Activated CD4-positive, alpha-beta T cell treated with anti-CD3 and anti-CD28 coated beads, Interleukin-2, amount 10 ng/mL, durations not matched to agents 24 days and 14 days (primary cell): ENCODE measurements at regions of chr19 and their contacts with region 1.

Region 1: GRCh38 chr19:19643158-19644053 is at the start of gene GMIP:
- DNase-seq: peak; percentile 96
- H3K4me3 Mint-ChIP-seq: peak within 1 kb of the TSS; percentile 98
- H3K27ac Mint-ChIP-seq: peak within 1 kb of the TSS; percentile 94
- H3K4me1 Mint-ChIP-seq: peaks cover 14% of the 10 kb centered on the region
- H3K27me3 Mint-ChIP-seq: no peaks in the 10 kb centered on the region
- total RNA-seq, gene GMIP: 56.1 and 61.2 TPM in 2 replicates

Region 2: DNA sequence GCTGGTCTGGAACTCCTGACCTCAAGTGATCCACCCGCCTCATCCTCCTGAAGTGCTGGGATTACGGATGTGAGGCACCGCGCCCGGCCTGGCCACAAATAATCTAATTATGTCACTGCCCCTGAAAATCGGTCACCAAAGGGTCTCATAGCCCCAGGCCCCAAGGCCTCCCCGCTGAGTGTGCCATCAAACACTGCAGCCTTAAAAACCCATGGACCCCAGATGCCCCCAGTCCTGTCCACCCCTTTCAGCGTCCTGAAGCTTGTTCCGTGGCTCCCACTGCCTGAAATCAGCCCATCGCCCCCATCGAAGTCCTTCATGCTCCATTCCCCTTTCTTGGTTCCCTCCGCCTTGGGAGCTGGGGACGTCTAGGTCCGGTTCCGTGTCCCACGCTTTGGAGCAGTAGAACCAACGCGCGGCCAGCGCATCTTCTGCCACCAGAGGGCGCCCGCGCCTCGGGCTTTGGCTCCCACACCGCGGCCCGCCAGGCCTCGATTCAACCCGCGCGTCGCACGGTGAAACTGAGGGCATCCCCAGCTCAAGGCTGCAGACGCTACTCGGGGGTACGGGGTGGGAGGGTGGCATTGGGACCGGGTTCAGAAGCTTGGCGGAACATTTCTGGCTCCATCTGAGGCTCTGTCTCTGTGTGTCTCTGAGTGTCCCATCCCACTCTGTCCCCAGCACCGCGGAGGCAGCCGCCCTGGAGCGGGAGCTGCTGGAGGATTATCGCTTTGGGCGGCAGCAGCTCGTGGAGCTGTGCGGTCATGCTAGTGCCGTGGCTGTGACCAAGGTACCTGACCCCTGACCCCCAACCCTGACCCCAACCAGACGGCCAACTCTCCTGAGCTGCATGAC is 111.2 kb before region 1 on chr19:
- intact Hi-C with region 1: loop called (anchors 1 kb)
- DNase-seq: peak; percentile 96
- H3K4me3 Mint-ChIP-seq: peak overlapping the region; percentile 14
- H3K27ac Mint-ChIP-seq: peak overlapping the region; percentile 47
- H3K4me1 Mint-ChIP-seq: peaks cover 16% of the 10 kb centered on the region
- H3K27me3 Mint-ChIP-seq: peaks cover 3% of the 10 kb centered on the region

Region 3: DNA sequence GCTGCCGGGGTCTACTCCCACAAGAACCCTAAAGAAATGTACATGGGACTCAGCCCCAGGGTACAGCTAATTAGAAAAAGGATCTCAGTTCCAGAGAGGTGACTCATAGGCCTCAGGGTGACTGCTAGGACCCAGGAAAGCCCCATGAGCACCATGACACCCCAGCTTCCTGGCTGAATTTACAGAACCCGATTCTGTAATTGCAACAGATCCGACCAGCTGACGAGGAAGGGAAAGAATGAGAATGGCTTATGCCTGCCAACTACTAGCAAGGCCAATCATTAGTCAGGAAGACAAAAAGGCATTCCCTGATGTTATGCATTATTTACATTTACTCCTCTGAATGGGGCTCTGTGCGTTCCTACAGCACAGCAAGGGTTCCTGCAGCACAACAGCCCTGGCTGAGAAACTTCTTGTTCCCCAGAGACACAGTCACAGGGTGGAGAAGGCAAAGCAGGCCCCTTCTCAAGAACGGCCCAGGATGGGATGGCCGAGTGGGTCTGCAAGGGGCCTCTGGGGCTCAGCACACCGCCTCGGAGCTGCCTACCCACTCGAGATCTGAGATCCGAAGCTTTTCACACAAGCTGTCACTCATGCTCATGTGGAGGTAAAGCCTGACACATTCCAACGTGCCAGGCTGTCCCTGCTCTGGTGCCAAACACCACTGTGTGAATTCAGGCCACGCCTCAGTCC is 52.1 kb before region 1 on chr19:
- intact Hi-C with region 1: loop called (anchors 1 kb)
- DNase-seq: peak; percentile 92
- H3K4me3 Mint-ChIP-seq: peak overlapping the region; percentile 75
- H3K27ac Mint-ChIP-seq: peak overlapping the region; percentile 94
- H3K4me1 Mint-ChIP-seq: peaks cover 60% of the 10 kb centered on the region
- H3K27me3 Mint-ChIP-seq: no peaks in the 10 kb centered on the region

Region 4: GRCh38 chr19:19597809-19598306 is 45.5 kb before region 1 on chr19:
- intact Hi-C with region 1: loop called (anchors 2 kb)
- DNase-seq: peak; percentile 91
- H3K4me3 Mint-ChIP-seq: peak overlapping the region; percentile 82
- H3K27ac Mint-ChIP-seq: peak overlapping the region; percentile 96
- H3K4me1 Mint-ChIP-seq: peaks cover 61% of the 10 kb centered on the region
- H3K27me3 Mint-ChIP-seq: no peaks in the 10 kb centered on the region

Region 5: GRCh38 chr19:19627621-19628500 is 15.5 kb before region 1 on chr19 and contains the start of gene LPAR2:
- intact Hi-C with region 1: loop called (anchors 1 kb)
- DNase-seq: peak; percentile 91
- H3K4me3 Mint-ChIP-seq: peak within 1 kb of the TSS; percentile 97
- H3K27ac Mint-ChIP-seq: peak within 1 kb of the TSS; percentile 97
- H3K4me1 Mint-ChIP-seq: peaks cover 23% of the 10 kb centered on the region
- H3K27me3 Mint-ChIP-seq: no peaks in the 10 kb centered on the region
- total RNA-seq, gene LPAR2: 21.9 and 23.9 TPM in 2 replicates

Region 6: DNA sequence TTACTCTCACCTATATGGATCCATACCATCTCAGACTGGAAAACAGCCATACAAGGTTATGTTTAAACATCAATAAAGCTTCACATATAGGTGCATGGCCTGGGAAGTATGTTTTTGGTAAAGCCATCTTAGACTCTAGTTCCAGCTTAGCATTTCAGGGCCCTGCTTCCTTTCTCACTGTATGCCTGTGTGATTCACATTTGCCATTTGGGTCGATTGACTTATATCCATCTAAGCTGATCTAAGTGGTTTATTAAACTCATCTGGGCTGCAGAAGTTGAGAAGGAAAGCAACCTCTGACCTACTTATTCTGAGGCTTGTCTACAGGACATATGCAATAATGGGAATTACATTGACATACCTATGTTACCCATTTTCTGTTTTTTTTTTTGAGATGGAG is 144.6 kb after region 1 on chr19:
- intact Hi-C with region 1: no loop called
- DNase-seq: no peak
- H3K4me3 Mint-ChIP-seq: no peak overlapping the region
- H3K27ac Mint-ChIP-seq: no peak overlapping the region
- H3K4me1 Mint-ChIP-seq: peaks cover 2% of the 10 kb centered on the region
- H3K27me3 Mint-ChIP-seq: no peaks in the 10 kb centered on the region